A673 (cell line): ENCODE measurements at regions of chr2 and their contacts with region 1.

Region 1: DNA sequence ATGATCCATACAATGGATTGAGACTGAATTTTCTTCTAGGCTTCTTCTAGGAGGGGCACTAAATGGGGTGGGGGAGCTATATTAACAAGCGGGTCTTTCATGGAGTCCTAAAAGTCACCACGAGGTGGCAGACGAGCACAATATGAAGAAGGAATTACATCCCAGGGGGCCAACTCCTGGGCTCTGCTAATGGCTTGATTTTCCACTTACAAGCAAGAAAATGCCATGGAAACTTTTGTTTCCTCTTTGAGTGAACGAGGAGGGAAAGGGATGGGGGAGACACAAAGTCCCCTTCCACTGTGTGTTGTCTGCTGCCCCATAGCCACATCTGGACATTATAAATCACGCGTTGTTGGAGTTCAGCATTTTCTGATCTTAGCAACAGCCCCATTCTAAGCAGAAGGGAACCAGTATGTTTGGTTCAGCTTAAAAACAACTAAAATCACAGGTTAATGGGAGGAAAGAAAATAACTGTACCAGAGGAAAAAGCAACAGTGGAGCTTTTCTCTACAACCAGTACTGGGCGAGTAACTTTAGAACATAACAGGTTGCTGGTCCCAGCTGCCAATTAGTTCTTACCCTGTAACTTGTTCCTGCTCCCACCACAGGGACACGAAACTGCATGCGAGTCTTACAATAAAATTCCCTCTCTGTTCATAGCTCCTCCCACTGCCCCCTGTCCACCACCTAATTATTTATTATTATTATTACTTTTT is 285.0 kb upstream of the PARD3B start:
- DNase-seq: peak; percentile 91
- H3K4me3 ChIP-seq: no peak overlapping the region
- H3K27ac ChIP-seq: no peak overlapping the region
- H3K4me1 ChIP-seq: peaks cover 39% of the 10 kb centered on the region
- H3K27me3 ChIP-seq: no peaks in the 10 kb centered on the region
- CTCF ChIP-seq: peak; percentile 90

Region 2: DNA sequence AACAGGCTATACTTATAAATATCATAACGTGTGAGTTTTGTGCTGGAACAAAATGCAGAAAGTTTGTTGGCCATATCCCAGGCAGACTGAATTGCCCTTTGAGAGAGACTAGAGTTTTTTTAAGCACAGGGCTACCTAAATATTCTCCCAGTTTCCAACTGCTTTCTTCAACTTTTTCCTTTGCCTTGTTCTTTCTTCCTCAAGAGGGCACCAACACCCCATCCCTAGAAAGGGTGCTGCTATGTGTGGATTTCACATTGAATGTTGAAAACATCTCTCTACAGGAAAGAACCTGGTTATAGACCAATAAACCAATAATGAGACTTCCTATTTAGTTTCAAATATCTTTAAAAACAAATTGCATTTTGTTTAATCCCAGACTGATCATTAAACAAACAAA is 235.8 kb before region 1 on chr2:
- CTCF ChIA-PET with region 1: no interaction called
- POLR2A ChIA-PET with region 1: no interaction called
- intact Hi-C with region 1: loop called (anchors 5 kb)
- DNase-seq: peak; percentile 76
- H3K4me3 ChIP-seq: no peak overlapping the region
- H3K27ac ChIP-seq: no peak overlapping the region
- H3K4me1 ChIP-seq: peaks cover 21% of the 10 kb centered on the region
- H3K27me3 ChIP-seq: no peaks in the 10 kb centered on the region
- CTCF ChIP-seq: peak; percentile 76

Region 3: GRCh38 chr2:204468746-204469429 is 208.6 kb after region 1 on chr2:
- CTCF ChIA-PET with region 1: no interaction called
- POLR2A ChIA-PET with region 1: no interaction called
- intact Hi-C with region 1: no loop called
- DNase-seq: peak; percentile 84
- H3K4me3 ChIP-seq: no peak overlapping the region
- H3K27ac ChIP-seq: peak overlapping the region; percentile 75
- H3K4me1 ChIP-seq: peaks cover 29% of the 10 kb centered on the region
- H3K27me3 ChIP-seq: no peaks in the 10 kb centered on the region
- CTCF ChIP-seq: no peak

Region 4: GRCh38 chr2:204545023-204545860 is 284.9 kb after region 1 on chr2 and contains the start of gene PARD3B:
- CTCF ChIA-PET with region 1: no interaction called
- POLR2A ChIA-PET with region 1: no interaction called
- intact Hi-C with region 1: loop called (anchors 5 kb)
- DNase-seq: peak; percentile 77
- H3K4me3 ChIP-seq: peak within 1 kb of the TSS; percentile 84
- H3K27ac ChIP-seq: peak within 1 kb of the TSS; percentile 83
- H3K4me1 ChIP-seq: peaks cover 7% of the 10 kb centered on the region
- H3K27me3 ChIP-seq: no peaks in the 10 kb centered on the region
- CTCF ChIP-seq: no peak
- total RNA-seq, gene PARD3B: 7.6 and 7.7 TPM in 2 replicates

Region 5: DNA sequence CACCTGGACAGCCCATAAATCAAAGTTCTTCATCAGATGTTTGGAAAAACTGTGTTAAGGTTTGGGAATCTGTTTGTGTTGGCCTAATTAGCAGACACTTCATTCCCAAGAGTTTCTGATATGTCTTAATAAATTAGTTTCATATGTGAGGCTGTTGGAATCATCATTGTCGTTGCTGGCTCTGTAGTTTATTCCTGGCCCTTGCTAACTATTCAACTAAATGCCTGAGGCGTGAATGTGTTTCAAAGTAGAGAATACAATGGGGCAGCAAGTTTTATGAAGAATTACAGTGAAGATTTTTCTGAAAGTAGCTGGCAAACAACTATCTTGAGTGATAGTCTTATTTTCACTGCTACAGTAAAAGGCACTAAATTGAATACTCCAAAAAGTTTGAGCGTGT is 426.1 kb after region 1 on chr2:
- CTCF ChIA-PET with region 1: no interaction called
- POLR2A ChIA-PET with region 1: no interaction called
- intact Hi-C with region 1: loop called (anchors 5 kb)
- DNase-seq: no peak
- H3K4me3 ChIP-seq: no peak overlapping the region
- H3K27ac ChIP-seq: no peak overlapping the region
- H3K4me1 ChIP-seq: peaks cover 10% of the 10 kb centered on the region
- H3K27me3 ChIP-seq: no peaks in the 10 kb centered on the region
- CTCF ChIP-seq: no peak

Region 6: GRCh38 chr2:204871231-204871953 is 611.1 kb after region 1 on chr2:
- CTCF ChIA-PET with region 1: no interaction called
- POLR2A ChIA-PET with region 1: no interaction called
- intact Hi-C with region 1: loop called (anchors 10 kb)
- DNase-seq: peak; percentile 53
- H3K4me3 ChIP-seq: no peak overlapping the region
- H3K27ac ChIP-seq: no peak overlapping the region
- H3K4me1 ChIP-seq: no peaks in the 10 kb centered on the region
- H3K27me3 ChIP-seq: no peaks in the 10 kb centered on the region
- CTCF ChIP-seq: peak; percentile 59

Region 7: GRCh38 chr2:205947621-205948495 is 1687.5 kb after region 1 on chr2:
- CTCF ChIA-PET with region 1: no interaction called
- POLR2A ChIA-PET with region 1: no interaction called
- intact Hi-C with region 1: loop called (anchors 10 kb)
- DNase-seq: peak; percentile 72
- H3K4me3 ChIP-seq: no peak overlapping the region
- H3K27ac ChIP-seq: no peak overlapping the region
- H3K4me1 ChIP-seq: no peaks in the 10 kb centered on the region
- H3K27me3 ChIP-seq: no peaks in the 10 kb centered on the region
- CTCF ChIP-seq: peak; percentile 96